Tibial artery (tissue), 4 donors: ENCODE measurements at regions of chr6 and their contacts with region 1.

Region 1: DNA sequence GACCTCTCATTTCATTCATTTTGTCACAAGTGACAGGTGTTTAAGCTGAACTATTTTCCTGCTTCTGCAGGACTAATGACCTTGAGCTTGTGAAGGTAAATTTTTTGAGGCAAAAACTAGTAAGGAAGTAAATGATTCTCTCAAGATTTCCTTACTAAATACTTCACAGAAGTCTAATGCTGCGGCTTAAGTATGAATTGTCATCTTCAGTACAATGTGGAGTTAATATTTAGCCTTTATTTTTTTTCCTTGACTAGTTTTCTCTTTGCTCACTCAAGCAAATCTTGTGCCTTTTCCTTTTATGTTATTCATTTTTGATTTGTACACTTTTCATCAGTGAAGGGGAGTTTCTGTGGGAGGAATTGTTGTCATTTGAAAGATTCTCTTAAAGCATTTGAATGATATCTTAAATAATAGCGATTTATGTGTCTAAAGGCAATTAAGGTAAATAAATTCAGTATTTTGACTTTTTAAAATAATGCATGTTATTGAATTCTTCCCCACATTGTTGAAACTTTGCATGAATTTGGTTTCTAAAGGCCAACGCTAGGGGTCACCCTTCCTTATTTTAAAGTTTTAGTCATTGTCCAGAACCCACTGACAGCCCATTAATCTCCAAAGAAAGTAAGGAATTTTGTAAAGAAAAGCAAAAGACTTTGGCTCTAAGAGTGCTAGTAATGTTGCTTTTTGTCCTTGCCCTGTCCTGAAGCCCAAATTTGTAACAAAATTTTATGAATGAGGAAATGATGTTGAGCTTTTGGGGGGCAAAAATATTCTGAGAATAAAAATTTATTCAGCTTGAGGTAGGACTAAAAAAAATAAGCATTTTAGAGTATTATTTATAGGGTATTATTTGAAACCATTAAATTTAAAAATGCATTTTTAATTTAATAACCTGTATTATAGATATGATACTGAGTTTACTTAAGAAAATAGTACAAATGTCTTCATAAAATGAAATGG is 157.4 kb upstream of the LAMA2 start:
- DNase-seq: no peak
- H3K4me3 ChIP-seq: no peak overlapping the region
- H3K27ac ChIP-seq: no peak overlapping the region
- H3K4me1 ChIP-seq: no peaks in the 10 kb centered on the region
- H3K27me3 ChIP-seq: no peaks in the 10 kb centered on the region
- CTCF ChIP-seq: peak; percentile 41 to 48

Region 2: DNA sequence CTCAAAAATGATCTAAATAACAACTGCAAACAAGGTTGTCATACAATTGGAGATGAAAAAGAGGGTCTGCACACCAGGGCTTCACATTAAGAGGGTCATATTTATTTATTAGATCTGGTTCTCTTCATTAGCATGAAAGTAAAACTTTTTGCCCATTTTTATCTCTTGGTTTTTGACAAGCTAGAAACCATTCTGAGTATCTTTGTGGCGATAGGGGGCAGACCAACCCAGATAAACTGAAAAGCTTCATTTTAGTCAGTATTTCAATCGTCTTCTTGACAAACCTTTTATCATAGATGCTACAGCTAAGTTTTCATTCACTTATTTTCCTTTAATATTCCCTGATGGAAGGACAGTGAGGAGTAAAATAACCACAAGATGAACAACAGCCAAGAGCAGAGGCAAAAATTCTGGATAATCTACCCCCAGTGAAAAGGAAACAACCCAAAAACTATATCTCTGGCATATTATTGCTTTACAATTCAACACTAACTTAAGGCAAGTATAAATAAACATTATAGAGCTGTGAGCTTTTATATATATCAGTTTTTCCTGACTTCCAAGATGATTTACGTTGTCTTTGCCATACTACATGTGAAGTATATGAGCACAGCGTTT is 869.9 kb before region 1 on chr6:
- intact Hi-C with region 1: loop called (anchors 10 kb)
- DNase-seq: no peak
- H3K4me3 ChIP-seq: no peak overlapping the region
- H3K27ac ChIP-seq: no peak overlapping the region
- H3K4me1 ChIP-seq: no peaks in the 10 kb centered on the region
- H3K27me3 ChIP-seq: no peaks in the 10 kb centered on the region
- CTCF ChIP-seq: peak; percentile 54 to 59